PC-9 (cell line): ENCODE measurements at regions of chr2 and their contacts with region 1.

Region 1: GRCh38 chr2:175175896-175176295 is 5.6 kb downstream of the ATP5MC3 start:
- DNase-seq: peak in 1 of 2 experiments; percentile 70
- H3K4me3 ChIP-seq: no peak overlapping the region
- H3K27ac ChIP-seq: peak overlapping the region; percentile 46
- H3K4me1 ChIP-seq: peaks cover 45% of the 10 kb centered on the region
- H3K27me3 ChIP-seq: no peaks in the 10 kb centered on the region
- CTCF ChIP-seq: no peak

Region 2: DNA sequence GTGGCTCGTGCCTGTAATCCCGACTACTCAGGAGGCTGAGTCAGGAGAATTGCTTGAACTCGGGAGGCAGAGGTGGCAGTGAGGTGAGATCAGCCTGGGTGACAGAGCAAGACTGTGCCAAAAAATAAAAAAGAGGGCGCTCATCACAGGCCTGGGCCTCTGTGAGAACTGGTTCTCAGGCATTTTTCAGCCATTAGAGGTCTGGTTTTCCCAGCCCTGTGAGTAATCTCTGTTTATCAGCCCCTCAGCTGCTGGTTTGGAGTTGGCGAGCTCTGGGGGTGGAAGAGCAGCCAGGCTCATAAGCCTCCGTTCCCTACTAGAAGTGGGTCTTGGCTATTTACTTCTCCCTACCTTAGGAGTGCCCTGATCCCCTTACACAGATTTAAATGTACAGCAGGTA is 464.7 kb before region 1 on chr2:
- CTCF ChIA-PET with region 1: no interaction called
- POLR2A ChIA-PET with region 1: no interaction called
- intact Hi-C with region 1: no loop called
- DNase-seq: no peak
- H3K4me3 ChIP-seq: no peak overlapping the region
- H3K27ac ChIP-seq: no peak overlapping the region
- H3K4me1 ChIP-seq: no peaks in the 10 kb centered on the region
- H3K27me3 ChIP-seq: peaks cover 23% of the 10 kb centered on the region
- CTCF ChIP-seq: no peak

Region 3: GRCh38 chr2:176317199-176317598 is 1141.3 kb after region 1 on chr2:
- CTCF ChIA-PET with region 1: no interaction called
- POLR2A ChIA-PET with region 1: no interaction called
- intact Hi-C with region 1: no loop called
- DNase-seq: no peak
- H3K4me3 ChIP-seq: no peak overlapping the region
- H3K27ac ChIP-seq: no peak overlapping the region
- H3K4me1 ChIP-seq: no peaks in the 10 kb centered on the region
- H3K27me3 ChIP-seq: no peaks in the 10 kb centered on the region
- CTCF ChIP-seq: no peak

Region 4: GRCh38 chr2:177169810-177170514 is 1994.1 kb after region 1 on chr2:
- CTCF ChIA-PET with region 1: interaction called, 10 read pairs
- POLR2A ChIA-PET with region 1: no interaction called
- intact Hi-C with region 1: no loop called
- DNase-seq: peak; percentile 68 to 92
- H3K4me3 ChIP-seq: no peak overlapping the region
- H3K27ac ChIP-seq: no peak overlapping the region
- H3K4me1 ChIP-seq: peaks cover 72% of the 10 kb centered on the region
- H3K27me3 ChIP-seq: no peaks in the 10 kb centered on the region
- CTCF ChIP-seq: no peak